Kidney (tissue), 22 donors: ENCODE measurements at regions of chr2 and their contacts with region 1.

Region 1: GRCh38 chr2:101697124-101698013 is at the start of gene MAP4K4:
- DNase-seq: peak; percentile 81 to 94 (median 89)
- H3K4me3 ChIP-seq: peak within 1 kb of the TSS; percentile 81 to 84 (median 82)
- H3K27ac ChIP-seq: peak within 1 kb of the TSS; percentile 40 to 70
- H3K4me1 ChIP-seq: peaks cover 0 to 9% (median 7%) of the 10 kb centered on the region in 3 donors
- H3K27me3 ChIP-seq: no peaks in the 10 kb centered on the region
- CTCF ChIP-seq: no peak
- total RNA-seq, gene MAP4K4: 62.8 TPM

Region 2: DNA sequence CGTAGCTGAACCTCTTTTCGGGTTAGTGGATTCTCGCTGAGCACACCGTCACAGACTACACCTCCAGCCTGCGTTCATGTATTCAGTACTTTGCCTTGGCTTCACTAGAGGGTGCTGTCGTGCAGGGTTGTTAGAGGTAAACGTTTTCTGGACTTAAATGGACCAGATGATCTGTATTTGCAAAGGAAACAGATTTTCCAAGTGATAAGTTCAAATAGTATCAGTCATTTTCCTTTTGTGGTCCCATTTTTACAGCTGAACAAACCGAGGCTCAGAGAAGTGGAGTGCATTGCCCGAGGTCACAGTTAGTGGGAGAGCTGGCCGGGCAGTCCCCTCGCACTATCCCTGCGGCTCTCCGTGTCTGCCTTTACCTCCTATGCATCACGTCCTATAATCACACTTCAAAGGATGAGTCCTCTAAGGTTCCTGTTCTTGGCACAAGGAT is 126.0 kb after region 1 on chr2:
- intact Hi-C with region 1: loop called (anchors 10 kb)
- DNase-seq: peak in 3 of 5 donors; percentile 35 to 71 (median 63)
- H3K4me3 ChIP-seq: no peak overlapping the region
- H3K27ac ChIP-seq: no peak overlapping the region
- H3K4me1 ChIP-seq: peaks cover 0 to 10% (median 10%) of the 10 kb centered on the region in 3 donors
- H3K27me3 ChIP-seq: no peaks in the 10 kb centered on the region
- CTCF ChIP-seq: peak; percentile 67

Region 3: DNA sequence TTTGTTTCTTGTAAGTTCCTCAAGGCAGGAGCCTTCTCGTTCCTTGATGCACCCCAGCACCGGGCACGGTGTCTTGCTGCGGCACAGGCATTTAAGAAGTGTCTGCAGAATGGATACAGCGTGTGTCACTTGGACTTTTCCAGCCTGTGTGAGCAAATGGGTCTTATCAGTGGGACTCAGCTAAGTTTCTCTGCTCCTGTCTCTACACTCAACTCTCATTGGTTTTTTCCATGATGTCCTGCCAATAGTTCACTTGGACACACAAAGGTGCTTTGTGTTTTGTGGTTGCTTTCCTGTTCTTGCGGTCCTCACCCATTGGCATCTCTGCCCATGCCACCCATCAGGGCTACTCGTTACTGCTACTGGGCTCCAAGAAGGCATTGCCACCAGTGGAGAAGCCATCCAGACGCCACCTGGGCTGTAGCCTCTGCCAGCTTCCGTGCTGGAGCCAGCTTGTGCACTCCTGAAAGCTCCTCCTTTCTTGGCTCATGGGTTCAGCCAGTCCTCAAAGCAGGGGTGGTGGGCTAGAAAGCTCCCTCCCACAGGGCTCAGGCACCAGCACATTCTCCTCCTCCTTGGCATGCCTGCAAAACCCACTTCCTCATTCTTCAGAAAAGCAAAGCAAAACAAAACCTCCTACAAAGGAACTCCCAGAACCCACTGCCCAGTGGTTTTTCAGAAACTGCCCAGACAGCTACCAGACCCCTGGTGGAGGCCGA is 335.8 kb after region 1 on chr2:
- intact Hi-C with region 1: no loop called
- DNase-seq: peak; percentile 24 to 89 (median 61)
- H3K4me3 ChIP-seq: no peak overlapping the region
- H3K27ac ChIP-seq: peak overlapping the region in 1 of 2 donors; percentile 71
- H3K4me1 ChIP-seq: peaks cover 4 to 18% (median 10%) of the 10 kb centered on the region in 3 donors
- H3K27me3 ChIP-seq: no peaks in the 10 kb centered on the region
- CTCF ChIP-seq: no peak